GM13977 (cell line): ENCODE measurements at regions of chr1 and their contacts with region 1.

Region 1: DNA sequence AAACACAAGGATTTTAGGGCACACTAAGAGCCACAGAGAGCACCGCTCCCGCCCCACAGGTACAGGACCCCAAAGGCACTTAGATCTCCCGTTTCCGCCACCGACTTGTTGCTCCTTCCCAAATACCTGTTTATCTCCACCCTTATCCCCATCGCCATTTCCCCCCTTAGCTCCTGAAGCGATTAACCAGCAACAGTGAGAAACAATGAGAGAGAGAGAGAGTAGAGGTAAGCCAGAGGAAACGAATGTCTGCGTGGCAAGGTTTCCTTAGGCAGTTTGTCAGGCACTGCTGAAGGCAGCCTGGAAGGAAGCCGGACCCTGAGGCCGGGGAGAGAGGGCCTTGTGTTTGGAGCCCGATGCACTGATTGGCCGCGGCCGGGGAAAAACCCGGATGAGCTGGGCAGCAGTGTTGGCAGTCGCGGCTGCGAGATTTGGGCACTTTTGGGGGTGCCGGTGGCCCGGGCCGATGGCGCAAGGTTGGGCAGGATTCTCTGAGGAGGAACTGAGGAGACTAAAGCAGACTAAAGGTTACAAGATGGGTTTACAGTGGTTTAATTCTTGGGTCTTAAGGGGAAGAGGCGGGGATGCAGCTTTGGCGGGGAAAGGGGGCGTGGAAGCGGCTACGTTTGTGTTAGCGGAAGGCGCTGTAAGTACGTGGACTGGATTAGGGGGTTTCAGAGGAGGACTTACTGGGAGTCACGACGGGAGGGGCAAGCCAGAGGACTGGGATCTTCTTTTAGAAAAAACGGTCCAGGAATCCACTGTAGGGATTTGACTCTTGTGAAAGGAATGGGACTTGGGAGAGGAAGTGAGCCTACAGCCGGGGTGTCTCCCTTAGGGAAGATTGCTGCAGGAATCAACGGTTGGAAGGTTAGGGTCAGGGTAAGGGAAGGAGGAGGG is at the start of gene GORAB:
- DNase-seq: peak; percentile 85
- CTCF ChIP-seq: no peak

Region 2: GRCh38 chr1:169914531-169914930 is 617.5 kb before region 1 on chr1:
- in situ Hi-C with region 1: loop called (anchors 25 kb)
- DNase-seq: no peak
- CTCF ChIP-seq: no peak

Region 3: GRCh38 chr1:170388489-170388888 is 143.5 kb before region 1 on chr1:
- in situ Hi-C with region 1: no loop called
- DNase-seq: no peak
- CTCF ChIP-seq: no peak